Panc1 (cell line): ENCODE measurements at regions of chr5 and their contacts with region 1.

Region 1: DNA sequence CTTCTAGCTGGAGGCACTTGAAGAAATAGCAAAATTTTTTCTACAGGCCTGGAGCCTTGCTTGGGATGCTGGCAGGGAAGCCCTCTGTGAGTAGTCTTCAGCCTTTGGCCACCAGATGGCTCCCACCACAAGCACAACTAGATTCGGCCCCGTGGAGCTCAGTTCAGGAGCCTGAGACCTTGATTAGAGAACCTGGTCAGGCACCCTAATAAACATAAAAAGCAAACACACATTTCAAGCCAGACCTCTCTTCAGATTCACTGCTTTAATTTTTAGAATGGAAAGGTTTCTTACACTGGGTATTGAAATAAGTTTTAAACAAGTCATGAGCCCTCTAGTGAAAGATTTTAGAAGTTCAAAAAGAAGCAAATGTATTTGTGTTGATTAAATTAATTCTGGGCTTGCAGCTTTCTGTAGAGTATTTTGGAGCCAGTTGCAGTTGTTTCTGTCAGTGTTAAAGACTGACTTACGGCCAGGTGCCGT is 41.4 kb downstream of the GLRX start:
- DNase-seq: peak; percentile 73
- ATAC-seq: peak; percentile 98
- H3K4me3 ChIP-seq: no peak overlapping the region
- H3K27ac ChIP-seq: no peak overlapping the region
- H3K4me1 ChIP-seq: no peaks in the 10 kb centered on the region
- H3K27me3 ChIP-seq: no peaks in the 10 kb centered on the region
- CTCF ChIP-seq: peak; percentile 94

Region 2: GRCh38 chr5:95846554-95847260 is 65.6 kb after region 1 on chr5:
- CTCF ChIA-PET with region 1: interaction called, 11 read pairs
- POLR2A ChIA-PET with region 1: no interaction called
- in situ Hi-C with region 1: no loop called
- intact Hi-C with region 1: loop called (anchors 1 kb)
- DNase-seq: no peak
- ATAC-seq: peak; percentile 91
- H3K4me3 ChIP-seq: no peak overlapping the region
- H3K27ac ChIP-seq: no peak overlapping the region
- H3K4me1 ChIP-seq: no peaks in the 10 kb centered on the region
- H3K27me3 ChIP-seq: no peaks in the 10 kb centered on the region; the same call in 1 of the 2 replicates
- CTCF ChIP-seq: peak; percentile 93